ENCODE measurements at regions of chr13 and their contacts with region 1.

Region 1: DNA sequence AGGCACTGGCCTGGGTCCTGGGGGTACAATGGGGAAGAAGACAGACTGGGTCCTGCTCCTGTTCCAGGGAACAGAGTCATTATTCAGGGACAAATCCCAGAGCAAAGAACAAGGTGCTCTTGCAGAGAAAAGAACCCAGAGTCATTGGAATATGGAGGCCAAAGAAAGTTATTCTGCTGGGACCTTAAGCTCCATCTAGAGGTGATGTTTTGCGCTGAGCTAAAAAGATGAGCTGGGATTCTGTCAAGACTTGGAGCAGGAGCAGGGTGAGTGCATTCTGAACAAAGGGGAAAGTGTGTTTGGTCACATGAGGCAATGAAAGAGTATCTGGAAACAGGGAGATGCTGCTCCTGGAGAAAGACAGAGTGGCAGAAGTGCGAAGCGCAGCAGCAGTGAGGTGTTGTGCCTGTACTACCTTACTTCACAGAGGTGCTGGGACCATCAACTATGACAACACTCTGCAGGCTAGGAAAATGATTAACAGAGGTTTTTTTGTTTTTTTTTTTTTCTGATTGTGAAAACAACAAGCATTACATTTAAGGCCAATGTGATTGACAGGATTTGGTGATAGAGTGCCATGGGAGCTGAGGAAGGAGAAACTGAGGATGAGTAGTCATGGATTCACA is 95.3 kb upstream of the TNFSF11 start:
- DNase-seq: peak in 1 of 2 donors; percentile 44
- ATAC-seq: no peak
- H3K4me3 ChIP-seq: no peak overlapping the region
- H3K4me3 Mint-ChIP-seq: no peak overlapping the region
- H3K27ac ChIP-seq: no peak overlapping the region
- H3K27ac Mint-ChIP-seq: no peak overlapping the region
- H3K4me1 ChIP-seq: no peaks in the 10 kb centered on the region
- H3K4me1 Mint-ChIP-seq: peaks cover 0 to 6% of the 10 kb centered on the region in 2 donors
- H3K27me3 ChIP-seq: no peaks in the 10 kb centered on the region
- H3K27me3 Mint-ChIP-seq: no peaks in the 10 kb centered on the region
- CTCF ChIP-seq: no peak

Region 2: DNA sequence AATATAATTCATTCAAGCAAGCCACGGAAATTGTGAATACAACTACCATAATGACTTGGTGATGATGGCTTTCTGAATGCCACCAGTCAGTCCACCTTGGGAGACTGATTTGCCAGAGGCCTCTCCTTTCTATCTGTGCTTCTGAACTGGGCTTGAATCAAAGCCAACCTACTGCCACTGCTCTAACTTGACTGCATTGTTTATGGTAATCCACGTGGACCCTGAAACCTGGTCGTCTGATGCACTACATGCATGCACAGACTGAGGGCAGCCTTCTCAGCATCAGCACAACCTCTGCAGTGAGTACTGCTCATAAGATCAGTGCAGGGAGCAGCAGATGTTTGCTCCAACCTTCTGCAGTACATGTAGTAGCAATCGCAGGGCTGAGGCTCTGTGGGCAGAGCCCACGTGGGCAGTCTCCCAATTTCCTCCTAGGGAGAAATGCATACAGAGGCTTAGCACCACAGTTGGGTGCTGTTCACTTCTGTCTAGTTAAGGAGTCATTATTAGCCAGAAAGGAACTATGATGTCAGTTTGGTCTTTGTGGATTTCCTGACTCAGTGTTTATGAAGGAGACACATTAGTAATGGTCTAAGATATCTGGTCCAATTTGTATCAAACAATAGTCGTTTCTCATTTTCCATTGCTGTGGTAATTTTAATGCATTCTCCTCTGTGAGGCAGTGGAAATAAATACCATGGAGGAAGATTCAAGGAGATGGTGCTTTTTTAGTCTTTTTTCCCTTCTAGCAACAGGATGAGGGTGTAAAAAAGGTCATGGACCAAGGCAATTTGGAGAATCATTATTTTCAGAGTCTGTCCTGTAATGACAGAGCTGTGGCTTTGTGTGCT is 124.2 kb before region 1 on chr13:
- intact Hi-C with region 1: loop called (anchors 10 kb)
- DNase-seq: peak in 1 of 2 donors; percentile 67
- ATAC-seq: peak; percentile 61 to 84 (median 78)
- H3K4me3 ChIP-seq: no peak overlapping the region
- H3K4me3 Mint-ChIP-seq: peak overlapping the region; percentile 5
- H3K27ac ChIP-seq: peak overlapping the region; percentile 14
- H3K27ac Mint-ChIP-seq: peak overlapping the region; percentile 55 to 71
- H3K4me1 ChIP-seq: peaks cover 18% of the 10 kb centered on the region
- H3K4me1 Mint-ChIP-seq: peaks cover 15 to 20% of the 10 kb centered on the region in 2 donors
- H3K27me3 ChIP-seq: no peaks in the 10 kb centered on the region
- H3K27me3 Mint-ChIP-seq: no peaks in the 10 kb centered on the region
- CTCF ChIP-seq: no peak

Measured in natural killer cell (primary cell).